K562 (cell line): ENCODE measurements at regions of chr17 and their contacts with region 1.

Region 1: DNA sequence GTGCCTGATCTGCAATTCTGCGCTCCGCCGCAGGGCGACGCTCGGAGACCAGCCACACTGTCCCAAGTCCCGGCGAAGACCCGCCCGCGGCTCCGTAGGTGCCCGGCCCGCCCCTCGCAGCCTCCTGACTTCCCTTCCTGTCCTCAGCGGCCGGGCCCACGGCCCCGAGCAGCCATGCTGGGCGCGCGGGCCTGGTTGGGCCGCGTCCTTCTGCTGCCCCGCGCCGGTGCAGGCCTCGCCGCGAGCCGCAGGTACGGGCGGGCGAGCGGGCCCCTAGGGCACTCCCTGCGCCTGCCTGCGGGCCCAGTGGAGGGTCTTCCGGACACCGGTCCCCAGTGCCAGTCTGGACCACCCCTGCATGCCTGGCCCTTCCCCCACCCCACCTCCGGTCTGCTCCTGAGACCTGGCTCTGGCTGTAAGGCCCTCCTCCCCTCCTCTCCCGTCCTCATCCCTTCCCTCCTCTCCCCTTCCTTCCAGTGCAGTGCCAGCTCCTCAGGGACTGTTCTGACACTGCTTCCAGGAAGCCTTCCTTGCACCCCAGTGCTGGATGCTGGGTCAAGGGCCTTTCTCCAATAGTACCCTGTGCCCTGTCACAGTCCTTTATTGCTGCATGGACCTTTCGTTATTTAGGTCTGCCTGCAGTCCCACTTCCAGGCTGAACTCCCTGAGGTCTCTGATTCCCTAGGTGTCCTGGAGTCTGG is at the start of gene SPATA20:
- DNase-seq: peak; percentile 84 to 90 (median 88)
- ATAC-seq: peak; percentile 84
- H3K4me3 ChIP-seq: peak within 1 kb of the TSS; percentile 33
- H3K27ac ChIP-seq: peak within 1 kb of the TSS; percentile 26; the same call in 1 of the 3 replicates
- H3K4me1 ChIP-seq: peaks cover 15 to 53% of the 10 kb centered on the region in 2 experiments; a peak in 4 of 5 replicates
- H3K27me3 ChIP-seq: 0 out of 5 replicates have a peak, but pooled peaks cover 0 to 6% of the 10 kb centered on the region in 2 experiments
- CTCF ChIP-seq: peak; percentile 95 to 97 (median 95)
- EP300 ChIP-seq: no peak
- POLR2A ChIP-seq: no peak
- RAD21 ChIP-seq: peak; percentile 93 to 96
- polyA plus RNA-seq, gene SPATA20: 0.08 to 0.13 TPM

Region 2: DNA sequence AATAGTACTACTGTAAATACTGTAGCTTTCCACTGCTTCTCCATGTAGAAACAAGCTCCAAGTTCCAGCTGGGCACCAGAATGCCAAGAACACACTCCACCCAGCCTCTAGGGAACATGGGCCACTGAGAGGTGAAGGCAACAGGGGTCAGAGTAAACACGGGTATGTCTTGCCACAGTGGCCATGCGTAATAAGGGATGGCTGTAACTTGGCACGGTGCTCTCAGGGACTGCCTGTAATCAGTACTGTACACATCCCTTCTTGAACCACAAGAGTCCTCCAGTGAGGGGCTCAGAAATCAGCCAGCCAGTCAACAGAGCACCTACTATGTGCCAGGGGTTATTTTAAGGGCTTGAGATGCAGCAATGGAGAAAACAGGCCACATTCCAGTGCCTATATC is 160.7 kb before region 1 on chr17:
- CTCF ChIA-PET with region 1: no interaction called
- POLR2A ChIA-PET with region 1: no interaction called
- in situ Hi-C with region 1: no loop called
- intact Hi-C with region 1: no loop called
- DNase-seq: no peak
- ATAC-seq: no peak
- H3K4me3 ChIP-seq: no peak overlapping the region
- H3K27ac ChIP-seq: no peak overlapping the region
- H3K4me1 ChIP-seq: 0 out of 5 replicates have a peak, but pooled peaks cover 0 to 4% of the 10 kb centered on the region in 2 experiments
- H3K27me3 ChIP-seq: no peaks in the 10 kb centered on the region
- CTCF ChIP-seq: no peak
- EP300 ChIP-seq: no peak
- POLR2A ChIP-seq: no peak
- RAD21 ChIP-seq: no peak

Region 3: GRCh38 chr17:50575581-50576210 is 28.5 kb after region 1 on chr17:
- CTCF ChIA-PET with region 1: no interaction called
- POLR2A ChIA-PET with region 1: no interaction called
- in situ Hi-C with region 1: no loop called
- intact Hi-C with region 1: no loop called
- DNase-seq: no peak
- ATAC-seq: no peak
- H3K4me3 ChIP-seq: no peak overlapping the region
- H3K27ac ChIP-seq: no peak overlapping the region
- H3K4me1 ChIP-seq: peaks cover 14 to 32% of the 10 kb centered on the region in 2 experiments; a peak in 4 of 5 replicates
- H3K27me3 ChIP-seq: peaks cover 12 to 82% of the 10 kb centered on the region in 2 experiments; a peak in 4 of 5 replicates
- CTCF ChIP-seq: 0 out of 6 replicates have a peak, but pooled peaks of 1 of the 3 experiments have one; percentile 25
- EP300 ChIP-seq: no peak
- POLR2A ChIP-seq: no peak
- RAD21 ChIP-seq: no peak

Region 4: DNA sequence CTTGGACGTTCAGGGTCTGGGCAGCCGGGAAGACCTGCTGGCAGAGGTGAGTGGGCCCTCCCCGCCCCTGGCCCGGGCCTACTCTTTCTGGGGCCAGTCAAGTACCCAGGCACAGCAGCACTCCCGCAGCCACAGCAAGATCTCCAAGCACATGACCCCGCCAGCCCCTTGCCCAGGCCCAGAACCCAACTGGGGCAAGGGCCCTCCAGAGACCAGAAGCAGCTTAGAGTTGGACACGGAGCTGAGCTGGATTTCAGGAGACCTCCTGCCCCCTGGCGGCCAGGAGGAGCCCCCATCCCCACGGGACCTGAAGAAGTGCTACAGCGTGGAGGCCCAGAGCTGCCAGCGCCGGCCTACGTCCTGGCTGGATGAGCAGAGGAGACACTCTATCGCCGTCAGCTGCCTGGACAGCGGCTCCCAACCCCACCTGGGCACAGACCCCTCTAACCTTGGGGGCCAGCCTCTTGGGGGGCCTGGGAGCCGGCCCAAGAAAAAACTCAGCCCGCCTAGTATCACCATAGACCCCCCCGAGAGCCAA is 78.9 kb after region 1 on chr17:
- CTCF ChIA-PET with region 1: interaction called, 9 read pairs
- POLR2A ChIA-PET with region 1: interaction called, 4 read pairs
- in situ Hi-C with region 1: loop called (anchors 5 kb)
- intact Hi-C with region 1: loop called (anchors 2 kb)
- DNase-seq: peak; percentile 77 to 87 (median 80)
- ATAC-seq: peak; percentile 96
- H3K4me3 ChIP-seq: no peak overlapping the region
- H3K27ac ChIP-seq: no peak overlapping the region
- H3K4me1 ChIP-seq: peaks cover 7 to 27% of the 10 kb centered on the region in 2 experiments; a peak in 4 of 5 replicates
- H3K27me3 ChIP-seq: peaks cover 18 to 37% of the 10 kb centered on the region in 2 experiments
- CTCF ChIP-seq: peak; percentile 81 to 91 (median 86)
- EP300 ChIP-seq: no peak
- POLR2A ChIP-seq: no peak
- RAD21 ChIP-seq: peak; percentile 80 to 86

Region 5: GRCh38 chr17:50689251-50689650 is 142.1 kb after region 1 on chr17:
- CTCF ChIA-PET with region 1: interaction called, 11 read pairs
- POLR2A ChIA-PET with region 1: interaction called, 4 read pairs
- in situ Hi-C with region 1: no loop called
- intact Hi-C with region 1: no loop called
- DNase-seq: peak in 1 of 4 experiments; percentile 31
- ATAC-seq: no peak; the same call in 2 of the 3 replicates
- H3K4me3 ChIP-seq: no peak overlapping the region
- H3K27ac ChIP-seq: no peak overlapping the region
- H3K4me1 ChIP-seq: peaks cover 4 to 15% of the 10 kb centered on the region in 2 experiments; a peak in 3 of 5 replicates
- H3K27me3 ChIP-seq: no peaks in the 10 kb centered on the region
- CTCF ChIP-seq: no peak
- EP300 ChIP-seq: no peak
- POLR2A ChIP-seq: no peak
- RAD21 ChIP-seq: no peak

Region 6: GRCh38 chr17:50783193-50783660 is 236.0 kb after region 1 on chr17:
- CTCF ChIA-PET with region 1: no interaction called
- POLR2A ChIA-PET with region 1: no interaction called
- in situ Hi-C with region 1: no loop called
- intact Hi-C with region 1: loop called (anchors 2 kb)
- DNase-seq: peak; percentile 89 to 93 (median 92)
- ATAC-seq: peak; percentile 98
- H3K4me3 ChIP-seq: no peak overlapping the region
- H3K27ac ChIP-seq: no peak overlapping the region
- H3K4me1 ChIP-seq: peaks cover 0 to 4% of the 10 kb centered on the region in 2 experiments; a peak in 1 of 5 replicates
- H3K27me3 ChIP-seq: no peaks in the 10 kb centered on the region
- CTCF ChIP-seq: peak; percentile 98 to 99 (median 99)
- EP300 ChIP-seq: no peak
- POLR2A ChIP-seq: no peak
- RAD21 ChIP-seq: peak; percentile 94 to 98

Region 7: DNA sequence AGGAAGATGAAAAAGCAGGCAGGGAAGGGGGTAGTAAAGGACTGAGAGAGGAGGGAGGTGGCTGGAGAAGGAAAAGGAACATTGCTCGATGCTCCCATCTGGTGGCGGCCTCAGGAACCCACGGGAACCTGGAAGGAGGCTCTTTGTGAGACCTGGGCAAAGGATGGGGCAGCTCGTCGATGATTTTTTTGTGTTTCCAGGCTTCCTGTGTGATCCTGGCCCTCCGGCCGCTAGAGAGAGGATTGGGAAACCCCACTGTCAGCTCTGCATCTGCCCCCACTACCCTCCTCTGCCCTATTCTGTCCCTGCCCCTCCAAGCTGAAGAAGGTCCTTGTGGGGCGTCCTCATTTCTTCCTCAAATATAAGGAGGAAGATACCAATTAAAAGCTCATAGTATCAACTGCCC is 294.8 kb after region 1 on chr17:
- CTCF ChIA-PET with region 1: no interaction called
- POLR2A ChIA-PET with region 1: no interaction called
- in situ Hi-C with region 1: no loop called
- intact Hi-C with region 1: loop called (anchors 1 kb)
- DNase-seq: peak; percentile 77 to 84 (median 83)
- ATAC-seq: peak; percentile 93
- H3K4me3 ChIP-seq: no peak overlapping the region
- H3K27ac ChIP-seq: no peak overlapping the region
- H3K4me1 ChIP-seq: peaks cover 0 to 13% of the 10 kb centered on the region in 2 experiments; a peak in 2 of 5 replicates
- H3K27me3 ChIP-seq: no peaks in the 10 kb centered on the region
- CTCF ChIP-seq: peak; percentile 84 to 90 (median 87)
- EP300 ChIP-seq: no peak
- POLR2A ChIP-seq: no peak
- RAD21 ChIP-seq: peak; percentile 85 to 94

Region 8: GRCh38 chr17:50949989-50950881 is 403.1 kb after region 1 on chr17:
- CTCF ChIA-PET with region 1: interaction called, 3 read pairs
- POLR2A ChIA-PET with region 1: no interaction called
- in situ Hi-C with region 1: loop called (anchors 10 kb)
- intact Hi-C with region 1: no loop called
- DNase-seq: peak; percentile 80 to 89 (median 84)
- ATAC-seq: peak; percentile 93
- H3K4me3 ChIP-seq: peak overlapping the region; percentile 9
- H3K27ac ChIP-seq: peak overlapping the region; percentile 73
- H3K4me1 ChIP-seq: peaks cover 46 to 74% of the 10 kb centered on the region in 2 experiments
- H3K27me3 ChIP-seq: no peaks in the 10 kb centered on the region
- CTCF ChIP-seq: peak; percentile 88 to 93 (median 92)
- EP300 ChIP-seq: no peak
- POLR2A ChIP-seq: no peak
- RAD21 ChIP-seq: peak; percentile 97 to 99